Activated naive CD4-positive, alpha-beta T cell treated with anti-CD3 and anti-CD28 coated beads for 36 hours (primary cell): ENCODE measurements at regions of chr2 and their contacts with region 1.

Region 1: GRCh38 chr2:36355151-36355889 is at the start of gene CRIM1:
- DNase-seq: peak; percentile 52
- H3K4me3 Mint-ChIP-seq: peak within 1 kb of the TSS; percentile 73
- H3K27ac Mint-ChIP-seq: no peak within 1 kb of the TSS
- H3K4me1 Mint-ChIP-seq: peaks cover 25% of the 10 kb centered on the region
- H3K27me3 Mint-ChIP-seq: peaks cover 34% of the 10 kb centered on the region
- total RNA-seq, gene CRIM1: 3.1 to 3.3 TPM

Region 2: GRCh38 chr2:35973132-35973736 is 382.1 kb before region 1 on chr2:
- CTCF ChIA-PET with region 1: interaction called, 4 read pairs
- intact Hi-C with region 1: loop called (anchors 1 kb)
- DNase-seq: peak; percentile 33
- H3K4me3 Mint-ChIP-seq: no peak overlapping the region
- H3K27ac Mint-ChIP-seq: no peak overlapping the region
- H3K4me1 Mint-ChIP-seq: peaks cover 2% of the 10 kb centered on the region
- H3K27me3 Mint-ChIP-seq: peaks cover 4% of the 10 kb centered on the region

Region 3: GRCh38 chr2:36507408-36507812 is 152.1 kb after region 1 on chr2:
- CTCF ChIA-PET with region 1: interaction called, 5 read pairs
- intact Hi-C with region 1: loop called (anchors 1 kb)
- DNase-seq: peak; percentile 68
- H3K4me3 Mint-ChIP-seq: no peak overlapping the region
- H3K27ac Mint-ChIP-seq: no peak overlapping the region
- H3K4me1 Mint-ChIP-seq: no peaks in the 10 kb centered on the region
- H3K27me3 Mint-ChIP-seq: no peaks in the 10 kb centered on the region

Region 4: GRCh38 chr2:36663851-36664695 is 308.8 kb after region 1 on chr2:
- CTCF ChIA-PET with region 1: interaction called, 8 read pairs
- intact Hi-C with region 1: loop called (anchors 1 kb)
- DNase-seq: peak; percentile 22
- H3K4me3 Mint-ChIP-seq: no peak overlapping the region
- H3K27ac Mint-ChIP-seq: no peak overlapping the region
- H3K4me1 Mint-ChIP-seq: no peaks in the 10 kb centered on the region
- H3K27me3 Mint-ChIP-seq: peaks cover 2% of the 10 kb centered on the region

Region 5: GRCh38 chr2:36785179-36785795 is 430.0 kb after region 1 on chr2:
- CTCF ChIA-PET with region 1: no interaction called
- intact Hi-C with region 1: loop called (anchors 5 kb)
- DNase-seq: peak; percentile 80
- H3K4me3 Mint-ChIP-seq: no peak overlapping the region
- H3K27ac Mint-ChIP-seq: no peak overlapping the region
- H3K4me1 Mint-ChIP-seq: no peaks in the 10 kb centered on the region
- H3K27me3 Mint-ChIP-seq: no peaks in the 10 kb centered on the region

Region 6: GRCh38 chr2:37324786-37325624 is 969.7 kb after region 1 on chr2 and contains the start of gene PRKD3:
- CTCF ChIA-PET with region 1: no interaction called
- intact Hi-C with region 1: loop called (anchors 5 kb)
- DNase-seq: peak; percentile 51
- H3K4me3 Mint-ChIP-seq: peak within 1 kb of the TSS; percentile 93
- H3K27ac Mint-ChIP-seq: peak within 1 kb of the TSS; percentile 84
- H3K4me1 Mint-ChIP-seq: peaks cover 29% of the 10 kb centered on the region
- H3K27me3 Mint-ChIP-seq: peaks cover 17% of the 10 kb centered on the region
- total RNA-seq, gene PRKD3: 13.0 TPM